Astrocyte of the cerebellum (primary cell): ENCODE measurements at regions of chr3 and their contacts with region 1.

Region 1: DNA sequence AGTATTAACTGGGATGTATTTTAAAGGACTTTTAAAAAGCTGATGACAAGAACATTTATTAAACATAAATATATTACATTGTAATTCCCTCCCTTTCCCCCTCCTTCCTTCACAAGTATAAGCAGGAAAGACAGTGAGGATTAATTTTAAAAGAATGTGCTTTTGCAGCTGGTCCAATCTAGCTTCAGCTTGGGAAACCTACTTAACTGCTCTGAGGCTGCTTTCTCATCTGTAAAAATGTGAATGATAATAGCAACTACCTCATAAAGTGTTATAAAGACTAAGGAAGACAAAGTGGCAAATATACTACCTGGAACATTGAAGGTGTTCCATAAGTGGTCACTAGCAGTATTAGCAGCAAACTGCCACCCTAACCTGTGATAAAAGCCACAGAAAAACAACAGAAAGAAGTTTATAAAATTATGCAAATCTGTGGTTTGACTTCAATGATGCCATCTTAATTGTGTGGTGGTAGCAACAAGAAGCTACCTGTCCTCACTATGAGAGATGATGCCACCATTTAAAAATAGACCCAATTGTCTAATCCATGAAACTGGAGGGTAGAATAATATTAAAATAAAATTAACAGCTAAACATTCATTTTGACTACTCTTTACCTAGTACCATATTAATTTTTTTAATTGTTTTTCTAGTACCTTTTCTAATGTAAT is 20.0 kb downstream of the DHX36 start:
- DNase-seq: no peak
- H3K4me3 ChIP-seq: no peak overlapping the region
- CTCF ChIP-seq: no peak

Region 2: DNA sequence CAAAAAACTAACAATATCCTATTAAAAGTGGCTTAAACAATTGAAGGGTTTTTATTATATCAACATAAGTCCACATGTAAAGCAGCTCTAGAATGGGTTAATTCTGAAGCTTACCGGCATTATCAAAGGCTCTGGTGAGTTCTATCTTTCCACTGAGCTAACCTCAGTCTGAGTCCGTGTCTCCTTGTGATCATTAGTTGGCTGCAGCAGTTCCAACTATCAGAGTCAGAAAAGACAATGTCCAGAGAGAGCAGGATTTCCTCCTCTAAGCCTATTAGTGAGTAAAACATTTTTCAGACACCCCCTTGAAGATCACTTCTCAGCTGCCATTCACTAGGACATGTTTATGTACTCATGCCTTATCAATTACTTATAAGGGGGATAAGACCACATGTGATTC is 29.9 kb before region 1 on chr3:
- in situ Hi-C with region 1: loop called (anchors 5 kb)
- DNase-seq: no peak
- H3K4me3 ChIP-seq: no peak overlapping the region
- CTCF ChIP-seq: no peak